ENCODE measurements at regions of chr17 and their contacts with region 1.

Region 1: GRCh38 chr17:62974788-62975187 is 8.8 kb downstream of the TANC2 start:
- DNase-seq: no peak
- H3K4me3 ChIP-seq: no peak overlapping the region
- H3K27ac ChIP-seq: no peak overlapping the region
- H3K4me1 ChIP-seq: peaks cover 14% of the 10 kb centered on the region; the same call in 1 of the 2 replicates
- H3K27me3 ChIP-seq: no peaks in the 10 kb centered on the region
- CTCF ChIP-seq: no peak

Region 2: GRCh38 chr17:62809656-62810055 is 165.1 kb before region 1 on chr17:
- CTCF ChIA-PET with region 1: interaction called, 10 read pairs
- POLR2A ChIA-PET with region 1: no interaction called
- intact Hi-C with region 1: no loop called
- DNase-seq: no peak
- H3K4me3 ChIP-seq: no peak overlapping the region
- H3K27ac ChIP-seq: no peak overlapping the region
- H3K4me1 ChIP-seq: peaks cover 39% of the 10 kb centered on the region
- H3K27me3 ChIP-seq: no peaks in the 10 kb centered on the region
- CTCF ChIP-seq: no peak

Region 3: DNA sequence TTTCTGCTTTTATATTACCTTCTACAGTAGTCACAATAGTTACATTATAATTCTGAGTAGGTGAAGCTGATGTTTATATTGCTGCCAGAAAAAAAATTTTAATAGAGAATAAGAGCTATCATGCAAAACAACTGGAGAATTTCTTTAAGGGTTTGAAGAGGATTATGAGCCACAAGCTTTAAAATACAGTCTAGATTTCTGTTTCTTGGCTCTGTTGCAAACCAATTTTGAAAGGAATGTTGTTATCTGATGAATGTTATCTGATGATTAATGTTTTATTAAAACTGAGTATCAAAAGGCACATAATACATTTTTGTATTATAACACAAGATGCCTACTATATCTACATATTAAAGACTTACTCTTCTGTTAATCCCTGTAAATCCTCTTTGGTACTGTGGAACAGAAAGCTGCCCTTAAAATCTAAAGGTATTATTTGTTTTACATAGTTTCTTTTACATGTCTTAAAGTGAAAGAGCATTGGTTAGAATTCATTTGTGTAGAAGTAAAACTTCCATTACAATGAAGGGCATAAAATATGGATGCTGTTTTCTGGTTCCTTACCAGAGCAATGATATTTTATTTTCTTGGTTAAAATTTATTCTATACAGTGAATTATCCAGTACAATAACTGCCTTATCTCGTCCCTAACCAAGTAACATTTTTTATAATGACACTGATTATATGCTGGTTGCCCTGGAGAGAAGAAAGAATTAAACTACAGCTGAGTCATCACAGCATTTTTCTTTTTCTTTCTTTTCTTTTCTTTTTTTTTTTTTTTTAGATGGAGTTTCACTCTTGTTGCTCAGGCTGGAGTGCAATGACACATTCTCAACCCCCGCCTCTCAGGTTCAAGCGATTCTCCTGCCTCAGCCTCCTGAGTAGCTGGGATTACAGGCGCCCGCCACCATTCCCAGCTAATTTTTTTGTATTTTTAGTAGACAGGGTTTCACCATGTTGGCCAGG is 196.9 kb after region 1 on chr17:
- CTCF ChIA-PET with region 1: no interaction called
- POLR2A ChIA-PET with region 1: no interaction called
- intact Hi-C with region 1: no loop called
- DNase-seq: no peak
- H3K4me3 ChIP-seq: no peak overlapping the region
- H3K27ac ChIP-seq: no peak overlapping the region
- H3K4me1 ChIP-seq: no peaks in the 10 kb centered on the region
- H3K27me3 ChIP-seq: no peaks in the 10 kb centered on the region
- CTCF ChIP-seq: no peak

Measured in PC-9 (cell line).